ENCODE measurements at regions of chr16 and their contacts with region 1.

Region 1: GRCh38 chr16:87375426-87376135 is 8.0 kb downstream of the FBXO31 start:
- DNase-seq: no peak
- H3K4me3 ChIP-seq: peak overlapping the region in 1 of 4 donors; percentile 36
- H3K27ac ChIP-seq: peak overlapping the region; percentile 32 to 75 (median 70)
- H3K4me1 ChIP-seq: peaks cover 12 to 78% (median 39%) of the 10 kb centered on the region in 3 donors
- H3K27me3 ChIP-seq: no peaks in the 10 kb centered on the region
- CTCF ChIP-seq: no peak
- POLR2A ChIP-seq: no peak

Region 2: DNA sequence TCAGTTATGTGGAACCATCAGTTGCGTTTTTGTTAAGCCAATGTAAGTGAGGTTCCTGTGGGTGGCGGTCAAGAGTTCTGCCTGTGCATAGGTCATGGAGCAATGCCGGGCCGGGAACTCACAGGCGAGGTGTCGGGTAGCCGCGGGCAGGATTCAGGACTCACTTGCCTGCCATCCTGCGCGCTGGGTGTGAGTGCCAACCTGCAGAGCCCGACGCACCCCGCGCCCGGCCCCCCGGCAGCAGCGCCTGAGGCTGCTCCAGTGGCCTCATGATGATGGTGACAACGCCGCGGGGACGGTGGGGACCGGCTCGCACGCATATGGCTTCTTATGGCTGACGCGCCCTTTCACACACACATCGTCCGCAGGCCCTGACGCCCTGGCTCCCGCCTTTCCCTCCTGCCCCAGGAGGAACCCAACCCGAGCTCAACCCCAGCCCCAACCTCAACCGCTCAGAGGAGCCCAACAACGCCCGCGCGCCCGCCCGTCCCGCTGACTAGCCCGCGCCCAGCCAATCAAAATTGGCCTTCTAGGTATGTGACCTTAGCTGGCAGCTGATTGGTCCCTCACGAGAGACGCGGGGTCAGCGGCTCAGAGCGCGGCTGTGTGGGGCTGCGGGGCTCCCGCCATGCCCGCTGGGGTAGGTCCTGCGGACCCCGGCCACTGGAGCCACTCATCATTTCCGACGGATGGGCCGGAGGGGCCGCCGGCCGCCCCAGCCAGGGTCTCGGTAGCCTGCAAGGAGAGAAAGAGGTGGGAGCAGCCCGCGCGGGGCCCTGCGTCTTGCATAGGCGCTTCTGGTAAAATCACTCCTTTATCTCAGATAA is 58.4 kb before region 1 on chr16 and contains the start of gene C16orf95:
- intact Hi-C with region 1: loop called (anchors 5 kb)
- DNase-seq: peak; percentile 66
- H3K4me3 ChIP-seq: peak within 1 kb of the TSS; percentile 77 to 98 (median 90)
- H3K27ac ChIP-seq: peak within 1 kb of the TSS; percentile 95 to 98 (median 97)
- H3K4me1 ChIP-seq: peaks cover 5 to 20% (median 9%) of the 10 kb centered on the region in 3 donors
- H3K27me3 ChIP-seq: no peaks in the 10 kb centered on the region
- CTCF ChIP-seq: peak; percentile 27 to 60 (median 52)
- POLR2A ChIP-seq: peak in 3 of 4 donors; percentile 88 to 94 (median 92)
- total RNA-seq, gene C16orf95: 0.38 to 0.95 (median 0.85) TPM